Left ventricle myocardium superior (tissue), 1 donor: ENCODE measurements at regions of chr2 and their contacts with region 1.

Region 1: GRCh38 chr2:65264821-65265670 is 37.4 kb downstream of the ACTR2 start:
- DNase-seq: no peak
- ATAC-seq: peak; percentile 82

Region 2: DNA sequence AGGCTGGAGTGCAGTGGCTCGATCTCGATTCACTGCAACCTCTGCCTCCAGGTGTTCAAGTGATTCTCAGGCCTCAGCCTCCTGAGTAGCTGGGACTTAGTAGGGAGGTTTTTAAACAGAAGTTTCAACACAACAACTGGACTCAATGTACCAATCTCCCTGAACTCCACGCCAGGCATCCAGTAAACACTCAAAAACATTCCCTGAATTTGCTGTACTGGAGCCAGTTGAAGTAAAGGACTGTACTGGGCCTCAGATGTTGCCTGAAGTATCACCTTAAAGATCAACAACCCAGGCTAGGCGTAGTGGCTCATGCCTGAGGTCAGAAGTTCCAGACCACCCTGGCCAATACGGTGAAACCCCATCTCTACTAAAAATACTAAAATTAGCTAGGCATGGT is 157.5 kb before region 1 on chr2:
- intact Hi-C with region 1: no loop called
- DNase-seq: no peak
- ATAC-seq: peak; percentile 44

Region 3: DNA sequence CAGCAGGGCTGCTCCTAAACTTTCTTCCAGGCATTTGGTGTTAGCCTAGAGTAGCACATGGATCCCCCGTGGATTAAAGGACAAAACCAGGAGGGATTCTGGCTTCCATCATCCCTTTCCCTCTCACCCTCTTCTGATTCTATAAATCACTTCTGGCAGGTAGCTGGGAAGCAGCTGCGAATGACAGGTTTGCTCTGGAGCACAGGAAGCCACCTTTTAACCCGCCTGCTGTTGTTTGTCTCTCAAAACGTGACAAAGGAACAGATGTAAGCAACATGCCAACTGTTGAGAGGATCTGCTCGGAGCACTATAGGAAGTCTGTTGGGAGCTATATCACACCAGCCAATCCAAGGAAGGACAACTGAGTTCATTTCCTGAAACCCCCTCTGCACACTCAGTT is 64.5 kb after region 1 on chr2:
- intact Hi-C with region 1: no loop called
- DNase-seq: no peak
- ATAC-seq: no peak

Region 4: DNA sequence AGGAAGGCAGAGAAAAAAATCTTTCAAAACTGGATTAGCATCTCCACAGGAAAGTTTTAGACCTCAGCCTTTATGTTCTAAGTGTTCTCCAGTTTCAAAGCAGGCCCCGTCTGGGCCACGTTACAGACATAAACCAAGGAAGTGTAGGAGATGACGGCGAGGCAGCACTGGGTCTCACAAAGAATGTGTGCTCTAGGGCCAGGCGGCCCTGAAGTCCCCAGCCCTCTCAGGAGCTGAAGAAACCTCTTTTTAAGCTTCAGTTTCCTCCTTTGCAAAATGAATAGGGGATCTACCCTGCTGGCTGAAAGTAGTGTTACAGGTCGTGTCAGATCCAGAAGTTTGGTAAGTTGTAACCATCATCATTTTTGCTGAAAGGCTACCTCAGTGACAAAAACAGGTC is 85.6 kb after region 1 on chr2:
- intact Hi-C with region 1: no loop called
- DNase-seq: no peak
- ATAC-seq: peak; percentile 26

Region 5: GRCh38 chr2:65436169-65436823 is 171.2 kb after region 1 on chr2:
- intact Hi-C with region 1: loop called (anchors 5 kb)
- DNase-seq: peak; percentile 95
- ATAC-seq: peak; percentile 77

Region 6: GRCh38 chr2:65554765-65555591 is 289.9 kb after region 1 on chr2:
- intact Hi-C with region 1: loop called (anchors 5 kb)
- DNase-seq: no peak
- ATAC-seq: no peak